ENCODE measurements at regions of chr14 and their contacts with region 1.

Region 1: GRCh38 chr14:75088574-75089373 is 19.3 kb downstream of the ZC2HC1C start:
- DNase-seq: peak; percentile 63
- H3K4me3 ChIP-seq: no peak overlapping the region
- H3K27ac ChIP-seq: no peak overlapping the region
- H3K4me1 ChIP-seq: no peaks in the 10 kb centered on the region
- CTCF ChIP-seq: peak; percentile 97

Region 2: GRCh38 chr14:74860906-74861733 is 227.7 kb before region 1 on chr14:
- CTCF ChIA-PET with region 1: interaction called, 3 read pairs
- POLR2A ChIA-PET with region 1: no interaction called
- intact Hi-C with region 1: loop called (anchors 1 kb)
- DNase-seq: peak; percentile 90
- H3K4me3 ChIP-seq: no peak overlapping the region
- H3K27ac ChIP-seq: no peak overlapping the region
- H3K4me1 ChIP-seq: peaks cover 6% of the 10 kb centered on the region
- CTCF ChIP-seq: peak; percentile 96

Region 3: DNA sequence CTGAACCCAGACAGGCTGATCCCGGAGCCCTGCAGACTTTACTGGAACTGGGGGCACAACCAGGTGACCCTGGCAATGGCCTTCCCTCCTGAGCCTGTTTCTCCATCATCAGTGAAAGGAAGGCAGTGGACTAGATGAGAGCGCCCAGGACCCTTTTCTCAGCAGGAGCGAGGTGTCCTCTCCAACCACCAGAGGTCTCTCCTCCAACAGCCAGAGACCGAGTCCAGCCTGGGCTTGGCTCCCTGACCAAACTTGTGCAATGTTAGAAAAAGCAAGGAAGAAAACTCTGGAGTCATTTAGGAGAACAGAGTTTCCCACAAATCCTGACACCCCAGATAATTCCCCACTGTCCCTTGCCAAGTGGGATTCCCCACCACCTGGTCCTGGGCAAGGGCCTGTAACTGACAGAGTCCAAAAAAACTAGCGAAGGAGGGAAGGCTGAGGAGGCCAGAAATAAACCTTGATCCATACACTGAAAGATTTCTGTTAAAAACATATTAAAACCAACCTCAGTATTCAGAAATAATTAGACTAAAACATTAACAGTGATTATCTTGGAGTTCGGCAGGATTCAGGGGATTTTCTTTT is 174.7 kb before region 1 on chr14:
- CTCF ChIA-PET with region 1: no interaction called
- POLR2A ChIA-PET with region 1: no interaction called
- intact Hi-C with region 1: loop called (anchors 1 kb)
- DNase-seq: peak; percentile 59
- H3K4me3 ChIP-seq: no peak overlapping the region
- H3K27ac ChIP-seq: no peak overlapping the region
- H3K4me1 ChIP-seq: no peaks in the 10 kb centered on the region
- CTCF ChIP-seq: peak; percentile 86

Region 4: GRCh38 chr14:75636100-75636692 is 547.4 kb after region 1 on chr14:
- CTCF ChIA-PET with region 1: no interaction called
- POLR2A ChIA-PET with region 1: no interaction called
- intact Hi-C with region 1: no loop called
- DNase-seq: no peak
- H3K4me3 ChIP-seq: no peak overlapping the region
- H3K27ac ChIP-seq: no peak overlapping the region
- H3K4me1 ChIP-seq: no peaks in the 10 kb centered on the region
- CTCF ChIP-seq: no peak

Measured in OCI-LY7 (cell line).